OCI-LY7 (cell line): ENCODE measurements at regions of chr4 and their contacts with region 1.

Region 1: GRCh38 chr4:48340965-48341775 is at the start of gene SLAIN2:
- DNase-seq: peak; percentile 95
- H3K4me3 ChIP-seq: peak within 1 kb of the TSS; percentile 93
- H3K27ac ChIP-seq: peak within 1 kb of the TSS; percentile 82
- H3K4me1 ChIP-seq: peaks cover 29% of the 10 kb centered on the region
- CTCF ChIP-seq: no peak
- total RNA-seq, gene SLAIN2: 21.1 and 24.7 TPM in 2 replicates

Region 2: GRCh38 chr4:47485047-47485692 is 856.0 kb before region 1 on chr4 and contains the start of gene ATP10D:
- CTCF ChIA-PET with region 1: no interaction called
- POLR2A ChIA-PET with region 1: no interaction called
- intact Hi-C with region 1: loop called (anchors 10 kb)
- DNase-seq: peak; percentile 88
- H3K4me3 ChIP-seq: peak within 1 kb of the TSS; percentile 73
- H3K27ac ChIP-seq: peak within 1 kb of the TSS; percentile 38
- H3K4me1 ChIP-seq: peaks cover 35% of the 10 kb centered on the region
- CTCF ChIP-seq: no peak
- total RNA-seq, gene ATP10D: 6.2 and 11.7 TPM in 2 replicates

Region 3: GRCh38 chr4:47972181-47972580 is 369.0 kb before region 1 on chr4:
- CTCF ChIA-PET with region 1: no interaction called
- POLR2A ChIA-PET with region 1: no interaction called
- intact Hi-C with region 1: no loop called
- DNase-seq: no peak
- H3K4me3 ChIP-seq: no peak overlapping the region
- H3K27ac ChIP-seq: no peak overlapping the region
- H3K4me1 ChIP-seq: no peaks in the 10 kb centered on the region
- CTCF ChIP-seq: no peak

Region 4: DNA sequence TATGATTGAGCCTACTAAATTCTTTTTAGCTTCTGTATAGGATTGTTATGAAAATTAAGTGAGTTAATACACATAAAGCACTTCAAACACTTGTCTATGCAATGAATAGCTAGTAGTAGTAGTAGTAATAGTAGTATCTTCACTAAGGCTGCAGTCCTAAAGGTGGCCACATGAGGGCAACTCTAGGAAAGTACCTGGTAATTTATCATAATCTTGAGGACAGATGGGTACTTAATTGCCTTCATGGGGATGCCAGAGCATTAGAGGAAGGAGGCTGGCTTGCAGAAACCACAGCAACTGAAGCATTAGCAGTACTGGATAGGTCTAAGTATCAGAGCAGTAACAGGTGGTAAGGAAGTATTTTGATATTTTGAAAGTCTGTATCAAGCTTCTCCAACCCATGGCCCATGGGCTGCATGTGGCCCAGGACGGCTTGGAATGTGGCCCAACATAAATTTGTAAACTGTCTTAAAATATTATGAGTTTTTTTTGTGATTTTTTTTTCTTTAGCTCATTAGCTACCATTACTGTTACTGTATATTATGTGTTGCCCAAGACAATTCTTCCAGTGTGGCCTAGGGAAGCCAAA is 307.3 kb before region 1 on chr4:
- CTCF ChIA-PET with region 1: no interaction called
- POLR2A ChIA-PET with region 1: no interaction called
- intact Hi-C with region 1: loop called (anchors 10 kb)
- DNase-seq: peak; percentile 79
- H3K4me3 ChIP-seq: no peak overlapping the region
- H3K27ac ChIP-seq: peak overlapping the region; percentile 7
- H3K4me1 ChIP-seq: peaks cover 71% of the 10 kb centered on the region
- CTCF ChIP-seq: peak; percentile 88

Region 5: GRCh38 chr4:48269861-48270522 is 71.2 kb before region 1 on chr4:
- CTCF ChIA-PET with region 1: no interaction called
- POLR2A ChIA-PET with region 1: interaction called, 4 read pairs
- intact Hi-C with region 1: loop called (anchors 1 kb)
- DNase-seq: peak; percentile 79
- H3K4me3 ChIP-seq: peak overlapping the region; percentile 80
- H3K27ac ChIP-seq: no peak overlapping the region
- H3K4me1 ChIP-seq: peaks cover 14% of the 10 kb centered on the region
- CTCF ChIP-seq: peak; percentile 42

Region 6: DNA sequence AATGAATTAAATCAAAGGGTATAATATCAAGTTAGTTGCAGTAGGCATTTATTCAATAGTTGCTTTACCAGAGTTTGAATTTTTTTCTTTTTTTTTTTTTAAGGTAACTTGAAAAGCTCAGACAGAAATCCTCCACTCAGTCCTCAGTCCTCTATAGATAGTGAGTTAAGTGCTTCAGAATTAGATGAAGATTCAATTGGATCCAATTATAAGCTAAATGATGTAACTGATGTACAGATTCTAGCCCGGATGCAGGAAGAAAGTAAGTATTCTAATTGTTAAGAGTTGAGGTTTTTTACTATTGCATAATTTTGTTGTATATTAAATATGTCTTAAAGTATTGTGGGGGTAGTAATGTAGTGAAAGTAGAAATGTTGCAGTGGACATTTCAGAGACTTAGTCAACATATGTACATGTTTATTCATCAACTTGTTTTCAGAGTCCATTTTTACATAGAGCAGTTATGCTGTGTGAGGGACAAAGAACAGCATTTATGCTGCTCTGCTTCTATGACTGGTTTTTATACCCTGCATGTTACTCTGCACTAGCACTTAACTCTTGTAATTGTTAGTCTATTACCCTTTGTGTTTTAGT is 38.5 kb after region 1 on chr4:
- CTCF ChIA-PET with region 1: no interaction called
- POLR2A ChIA-PET with region 1: no interaction called
- intact Hi-C with region 1: no loop called
- DNase-seq: no peak
- H3K4me3 ChIP-seq: no peak overlapping the region
- H3K27ac ChIP-seq: no peak overlapping the region
- H3K4me1 ChIP-seq: no peaks in the 10 kb centered on the region
- CTCF ChIP-seq: no peak

Region 7: GRCh38 chr4:48518143-48518542 is 177.0 kb after region 1 on chr4:
- CTCF ChIA-PET with region 1: no interaction called
- POLR2A ChIA-PET with region 1: no interaction called
- intact Hi-C with region 1: no loop called
- DNase-seq: no peak
- H3K4me3 ChIP-seq: no peak overlapping the region
- H3K27ac ChIP-seq: no peak overlapping the region
- H3K4me1 ChIP-seq: no peaks in the 10 kb centered on the region
- CTCF ChIP-seq: no peak

Region 8: DNA sequence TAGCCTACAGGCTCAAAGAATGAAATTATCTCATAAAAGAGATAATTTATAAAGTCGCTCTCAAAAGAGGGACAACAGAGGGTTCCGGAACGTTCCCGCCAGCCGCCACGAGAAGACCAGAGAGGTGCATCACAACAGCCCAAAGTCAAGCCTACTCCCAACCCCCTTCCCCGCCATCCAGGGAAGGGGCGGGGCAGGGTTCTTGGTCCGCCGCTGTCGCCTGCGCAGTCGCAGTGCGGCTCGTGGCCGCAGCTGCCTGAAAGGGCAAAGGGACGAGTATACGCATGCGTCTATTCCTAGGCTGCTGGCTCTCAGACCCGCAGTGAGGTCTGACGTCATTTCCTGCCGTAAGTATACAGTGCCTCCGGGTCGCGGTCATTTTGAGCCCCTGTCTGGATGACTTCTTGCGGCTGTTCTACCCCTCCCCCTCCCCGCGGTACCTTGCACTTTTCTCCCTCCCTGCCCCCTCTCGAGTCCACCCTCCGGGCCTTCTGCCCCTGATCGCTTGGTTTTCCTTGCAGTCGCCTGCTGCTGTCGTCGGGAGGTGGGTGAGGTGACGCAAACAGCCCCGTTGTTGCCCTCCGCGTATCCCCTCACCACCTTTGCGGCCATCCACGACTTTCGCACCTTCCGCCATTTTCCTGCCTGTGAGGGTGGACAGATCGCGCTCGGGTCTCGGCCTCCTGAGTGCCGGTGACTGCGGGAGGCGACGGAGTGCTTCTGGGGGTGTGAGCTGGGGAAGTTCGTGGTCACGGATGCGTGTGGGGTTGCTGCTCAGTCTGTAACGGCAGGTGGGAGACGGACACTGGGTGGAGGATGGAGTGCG is 489.7 kb after region 1 on chr4 and contains the start of gene OCIAD1:
- CTCF ChIA-PET with region 1: no interaction called
- POLR2A ChIA-PET with region 1: no interaction called
- intact Hi-C with region 1: loop called (anchors 2 kb)
- DNase-seq: peak; percentile 100
- H3K4me3 ChIP-seq: peak within 1 kb of the TSS; percentile 97
- H3K27ac ChIP-seq: peak within 1 kb of the TSS; percentile 86
- H3K4me1 ChIP-seq: peaks cover 22% of the 10 kb centered on the region
- CTCF ChIP-seq: no peak
- total RNA-seq, gene OCIAD1: 50.4 and 76.1 TPM in 2 replicates